GM12878 (cell line): ENCODE measurements at regions of chr2 and their contacts with region 1.

Region 1: GRCh38 chr2:101770726-101771125 is 73.2 kb downstream of the MAP4K4 start:
- DNase-seq: peak; percentile 30
- ATAC-seq: peak; percentile 95
- H3K4me3 ChIP-seq: no peak overlapping the region
- H3K27ac ChIP-seq: no peak overlapping the region
- H3K4me1 ChIP-seq: no peaks in the 10 kb centered on the region
- H3K27me3 ChIP-seq: no peaks in the 10 kb centered on the region
- CTCF ChIP-seq: peak; percentile 54 to 70 (median 56); a peak in 5 of 6 replicates
- EP300 ChIP-seq: no peak
- POLR2A ChIP-seq: no peak
- RAD21 ChIP-seq: peak; percentile 52

Region 2: GRCh38 chr2:101419096-101419663 is 351.5 kb before region 1 on chr2:
- CTCF ChIA-PET with region 1: interaction called, 34 read pairs
- POLR2A ChIA-PET with region 1: no interaction called
- RAD21 ChIA-PET with region 1: interaction called, 10 read pairs
- SMC1A ChIA-PET with region 1: interaction called, 8 read pairs
- in situ Hi-C with region 1: no loop called
- intact Hi-C with region 1: no loop called
- DNase-seq: no peak
- ATAC-seq: peak; percentile 94
- H3K4me3 ChIP-seq: no peak overlapping the region
- H3K27ac ChIP-seq: no peak overlapping the region
- H3K4me1 ChIP-seq: no peaks in the 10 kb centered on the region
- H3K27me3 ChIP-seq: no peaks in the 10 kb centered on the region; a peak in 2 of 4 replicates
- CTCF ChIP-seq: peak; percentile 65 to 70 (median 65)
- EP300 ChIP-seq: no peak
- POLR2A ChIP-seq: no peak
- RAD21 ChIP-seq: peak; percentile 81

Region 3: DNA sequence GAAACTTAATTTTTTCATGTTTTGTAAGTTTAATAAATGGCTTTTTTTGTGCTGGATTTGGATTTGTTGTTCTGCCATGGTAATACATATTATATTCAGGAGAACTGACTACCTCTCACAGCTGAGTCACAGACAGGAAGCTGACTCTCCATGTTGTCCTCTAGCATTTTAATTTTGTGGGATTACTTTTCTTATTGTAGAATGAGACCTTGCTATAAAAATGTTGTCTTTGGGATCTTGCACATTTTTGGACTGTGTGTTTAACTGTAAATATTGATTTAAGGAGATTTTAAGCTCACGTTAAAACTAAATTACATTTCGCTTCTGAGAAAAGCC is 24.4 kb before region 1 on chr2:
- CTCF ChIA-PET with region 1: interaction called, 12 read pairs
- POLR2A ChIA-PET with region 1: no interaction called
- RAD21 ChIA-PET with region 1: interaction called, 3 read pairs
- SMC1A ChIA-PET with region 1: interaction called, 3 read pairs
- in situ Hi-C with region 1: no loop called
- intact Hi-C with region 1: no loop called
- DNase-seq: no peak
- ATAC-seq: no peak
- H3K4me3 ChIP-seq: no peak overlapping the region
- H3K27ac ChIP-seq: no peak overlapping the region
- H3K4me1 ChIP-seq: peaks cover 6% of the 10 kb centered on the region
- H3K27me3 ChIP-seq: no peaks in the 10 kb centered on the region; a peak in 1 of 4 replicates
- CTCF ChIP-seq: no peak
- EP300 ChIP-seq: no peak
- POLR2A ChIP-seq: no peak
- RAD21 ChIP-seq: no peak

Region 4: DNA sequence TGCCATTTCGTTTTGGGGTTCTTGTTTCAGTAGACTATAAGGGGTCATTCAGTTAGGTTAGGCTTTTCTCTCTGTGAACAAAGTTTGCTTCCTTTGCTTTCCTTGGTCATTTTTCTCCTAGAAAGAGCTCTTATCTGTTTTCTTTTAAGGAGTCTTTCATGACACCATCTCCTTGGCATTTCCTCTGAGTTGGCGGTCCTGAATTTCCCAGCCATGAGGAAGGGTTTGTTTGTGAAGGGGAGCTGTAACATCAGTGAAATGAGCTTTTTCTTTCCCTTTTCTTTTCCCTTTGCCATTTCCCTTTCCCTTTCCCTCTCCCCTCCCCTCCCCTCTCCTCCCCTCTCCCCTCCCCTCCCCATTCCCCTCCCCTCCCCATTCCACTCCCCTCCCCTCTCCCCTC is 11.6 kb before region 1 on chr2:
- CTCF ChIA-PET with region 1: interaction called, 48 read pairs
- POLR2A ChIA-PET with region 1: interaction called, 6 read pairs
- RAD21 ChIA-PET with region 1: interaction called, 15 read pairs
- SMC1A ChIA-PET with region 1: interaction called, 15 read pairs
- in situ Hi-C with region 1: no loop called
- intact Hi-C with region 1: no loop called
- DNase-seq: no peak
- ATAC-seq: no peak
- H3K4me3 ChIP-seq: no peak overlapping the region
- H3K27ac ChIP-seq: no peak overlapping the region
- H3K4me1 ChIP-seq: peaks cover 26% of the 10 kb centered on the region
- H3K27me3 ChIP-seq: no peaks in the 10 kb centered on the region; a peak in 1 of 4 replicates
- CTCF ChIP-seq: no peak
- EP300 ChIP-seq: no peak
- POLR2A ChIP-seq: no peak
- RAD21 ChIP-seq: no peak

Region 5: DNA sequence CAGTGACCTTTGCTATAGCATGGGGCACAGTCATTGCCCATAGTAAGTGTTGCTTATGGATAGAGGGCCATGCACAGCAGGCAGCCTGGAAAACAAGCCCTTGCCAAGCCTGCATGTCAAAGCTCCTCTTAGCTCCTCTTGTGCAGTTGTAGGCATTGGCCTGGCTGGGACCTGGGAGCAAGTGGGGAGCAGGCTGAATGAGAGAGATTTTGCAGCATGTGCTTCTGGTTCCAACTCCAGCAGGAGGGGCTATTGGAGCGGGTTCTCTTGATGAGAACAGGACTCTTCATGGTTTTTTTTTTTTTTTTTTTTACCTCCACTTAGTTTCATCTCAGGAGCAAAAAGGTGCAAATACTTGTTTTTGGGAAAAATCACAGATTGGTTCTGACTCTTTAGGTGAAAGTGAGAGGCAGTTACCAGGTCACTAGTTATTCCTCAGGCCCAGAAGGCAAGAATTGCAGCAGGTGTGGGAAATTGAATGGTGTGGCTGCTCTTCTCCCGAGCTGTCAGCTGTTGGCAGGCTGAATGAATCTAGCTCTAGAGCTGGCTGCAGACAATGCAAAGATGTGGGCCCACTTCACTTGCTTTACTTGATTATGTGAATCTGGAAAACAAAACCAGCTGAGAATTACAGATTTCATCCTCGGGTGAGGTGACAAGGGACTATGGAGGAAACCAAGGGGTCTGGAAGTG is 22.7 kb after region 1 on chr2:
- CTCF ChIA-PET with region 1: interaction called, 5 read pairs
- POLR2A ChIA-PET with region 1: no interaction called
- RAD21 ChIA-PET with region 1: no interaction called
- SMC1A ChIA-PET with region 1: interaction called, 19 read pairs
- in situ Hi-C with region 1: no loop called
- intact Hi-C with region 1: no loop called
- DNase-seq: no peak
- ATAC-seq: no peak; the same call in 2 of the 3 replicates
- H3K4me3 ChIP-seq: no peak overlapping the region
- H3K27ac ChIP-seq: no peak overlapping the region
- H3K4me1 ChIP-seq: no peaks in the 10 kb centered on the region
- H3K27me3 ChIP-seq: no peaks in the 10 kb centered on the region
- CTCF ChIP-seq: peak in 1 of 3 experiments; percentile 14; a peak in 1 of 6 replicates
- EP300 ChIP-seq: no peak
- POLR2A ChIP-seq: no peak
- RAD21 ChIP-seq: 0 out of 2 replicates have a peak, but pooled peaks have one; percentile 22

Region 6: DNA sequence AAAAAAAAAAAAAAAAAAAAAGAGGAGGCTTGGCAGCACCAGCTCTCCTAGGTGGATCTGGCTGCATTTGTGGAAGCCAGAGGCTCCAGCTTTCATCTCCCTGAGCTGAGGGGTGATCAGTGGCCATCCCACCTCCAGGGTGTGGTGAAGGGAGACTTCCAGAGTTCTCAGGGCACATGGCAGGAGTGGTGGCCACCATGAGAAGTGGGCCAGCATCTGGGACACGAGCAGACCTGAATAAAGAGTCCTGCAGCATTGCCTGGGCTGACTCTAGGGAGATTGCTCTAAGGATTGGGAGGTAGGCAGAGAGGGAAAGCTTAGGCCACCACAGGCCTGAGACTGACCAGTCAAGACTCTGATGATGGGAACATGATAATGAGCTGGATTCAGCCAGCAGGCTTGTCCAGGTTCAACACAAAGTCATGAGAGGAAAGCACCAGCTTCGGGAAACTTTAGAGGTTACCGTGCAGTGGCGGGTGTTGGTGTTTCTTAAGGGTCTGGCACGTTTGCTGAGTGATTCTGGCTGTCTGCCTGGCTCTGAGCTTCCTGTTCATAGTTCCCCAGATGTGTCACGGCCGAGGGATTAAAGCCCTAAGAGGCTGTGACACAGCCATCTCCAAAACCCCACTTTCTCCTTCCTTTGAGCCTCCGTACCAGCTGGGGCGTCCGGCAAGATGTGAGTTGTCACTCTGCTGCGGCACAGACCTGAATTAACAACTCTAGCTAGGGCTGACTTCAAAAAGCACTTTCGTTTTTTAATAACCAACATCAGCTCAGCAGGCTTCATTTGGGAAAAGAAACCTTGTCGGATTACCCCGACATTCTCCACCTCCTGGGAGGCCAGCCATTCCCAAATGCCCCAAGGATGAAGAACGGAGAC is 333.5 kb after region 1 on chr2:
- CTCF ChIA-PET with region 1: no interaction called
- POLR2A ChIA-PET with region 1: no interaction called
- RAD21 ChIA-PET with region 1: no interaction called
- SMC1A ChIA-PET with region 1: no interaction called
- in situ Hi-C with region 1: no loop called
- intact Hi-C with region 1: no loop called
- DNase-seq: peak; percentile 67
- ATAC-seq: peak; percentile 79
- H3K4me3 ChIP-seq: peak overlapping the region; percentile 53
- H3K27ac ChIP-seq: peak overlapping the region; percentile 37; the same call in 1 of the 2 replicates
- H3K4me1 ChIP-seq: no peaks in the 10 kb centered on the region
- H3K27me3 ChIP-seq: no peaks in the 10 kb centered on the region
- CTCF ChIP-seq: no peak
- EP300 ChIP-seq: peak in 1 of 2 experiments; percentile 54; a peak in 2 of 4 replicates
- POLR2A ChIP-seq: no peak
- RAD21 ChIP-seq: no peak